Gastrocnemius medialis (tissue), 4 donors: ENCODE measurements at regions of chr1 and their contacts with region 1.

Region 1: GRCh38 chr1:234755449-234755863 is 145.5 kb upstream of the IRF2BP2 start:
- DNase-seq: peak; percentile 80 to 91
- ATAC-seq: peak; percentile 98 to 100
- H3K4me3 ChIP-seq: no peak overlapping the region
- H3K27ac ChIP-seq: peak overlapping the region in 2 of 4 donors; percentile 12 to 40
- H3K4me1 ChIP-seq: peaks cover 3 to 9% of the 10 kb centered on the region in 2 donors
- H3K27me3 ChIP-seq: no peaks in the 10 kb centered on the region
- CTCF ChIP-seq: no peak
- POLR2A ChIP-seq: peak; percentile 38 to 50

Region 2: DNA sequence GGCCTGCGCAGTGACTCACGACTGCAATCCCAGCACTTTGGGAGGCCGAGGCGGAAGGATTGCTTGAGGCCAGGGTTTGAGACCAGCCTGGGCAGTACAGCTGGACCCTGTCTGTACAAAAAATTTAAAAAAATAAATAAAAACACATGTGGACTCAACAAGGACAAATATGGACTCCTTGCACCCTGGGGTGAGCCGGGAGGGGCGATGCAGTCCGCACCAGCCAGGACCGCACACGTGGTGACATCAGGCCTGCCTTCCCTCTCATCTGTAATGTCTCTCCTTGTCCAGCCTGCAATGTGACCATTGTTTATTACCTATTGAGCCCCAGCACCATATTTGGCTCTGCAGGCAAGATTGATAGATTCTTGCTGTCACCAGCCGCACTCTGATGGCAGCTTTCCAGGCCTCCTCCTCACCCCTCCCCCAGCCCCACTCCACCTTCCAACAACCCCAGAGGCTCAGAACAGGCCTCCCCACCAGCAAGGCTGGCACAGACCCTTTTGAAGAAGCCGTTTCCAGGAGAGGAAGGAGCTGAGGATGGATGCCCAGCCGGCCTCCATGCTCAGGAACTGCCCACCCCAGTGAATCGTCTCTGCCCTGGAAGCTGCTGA is 200.7 kb before region 1 on chr1:
- in situ Hi-C with region 1: no loop called
- intact Hi-C with region 1: no loop called
- DNase-seq: no peak
- ATAC-seq: no peak
- H3K4me3 ChIP-seq: no peak overlapping the region
- H3K27ac ChIP-seq: no peak overlapping the region
- H3K4me1 ChIP-seq: peaks cover 0 to 5% of the 10 kb centered on the region in 2 donors
- H3K27me3 ChIP-seq: no peaks in the 10 kb centered on the region
- CTCF ChIP-seq: no peak
- POLR2A ChIP-seq: no peak

Region 3: GRCh38 chr1:234631721-234632125 is 123.7 kb before region 1 on chr1:
- in situ Hi-C with region 1: loop called in 1 of 4 experiments (anchors 10 kb)
- intact Hi-C with region 1: no loop called
- DNase-seq: no peak
- ATAC-seq: no peak
- H3K4me3 ChIP-seq: no peak overlapping the region
- H3K27ac ChIP-seq: peak overlapping the region in 3 of 4 donors; percentile 13 to 63 (median 29)
- H3K4me1 ChIP-seq: peaks cover 0 to 12% of the 10 kb centered on the region in 2 donors
- H3K27me3 ChIP-seq: no peaks in the 10 kb centered on the region
- CTCF ChIP-seq: no peak
- POLR2A ChIP-seq: no peak

Region 4: DNA sequence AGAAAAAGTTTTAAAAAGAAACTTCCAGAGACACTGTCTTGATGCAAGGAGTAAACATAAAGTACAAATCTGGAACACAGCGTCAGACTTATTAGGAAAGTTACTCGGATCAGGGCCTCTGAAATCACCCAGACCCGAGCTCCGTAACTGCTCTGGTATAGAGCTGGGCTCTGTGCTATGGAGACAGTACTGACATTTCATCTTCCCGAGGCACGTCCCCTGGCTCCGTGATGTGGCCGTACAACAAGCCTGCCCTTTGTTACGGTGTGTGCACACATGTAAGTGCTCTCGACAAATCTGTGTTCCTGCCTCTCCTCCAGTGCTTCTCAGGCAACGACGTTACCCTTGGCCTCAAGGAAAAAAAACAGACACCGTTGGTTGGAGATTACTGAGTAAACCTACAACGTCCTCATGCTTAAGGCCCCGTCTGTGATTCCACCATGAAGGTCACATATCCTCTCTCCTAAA is 38.5 kb before region 1 on chr1:
- in situ Hi-C with region 1: no loop called
- intact Hi-C with region 1: no loop called
- DNase-seq: peak in 1 of 2 donors; percentile 45
- ATAC-seq: peak; percentile 56 to 59
- H3K4me3 ChIP-seq: no peak overlapping the region
- H3K27ac ChIP-seq: peak overlapping the region; percentile 93 to 98 (median 96)
- H3K4me1 ChIP-seq: peaks cover 67 to 68% of the 10 kb centered on the region in 2 donors
- H3K27me3 ChIP-seq: no peaks in the 10 kb centered on the region
- CTCF ChIP-seq: no peak
- POLR2A ChIP-seq: peak in 1 of 2 donors; percentile 19